ENCODE measurements at regions of chr10 and their contacts with region 1.

Region 1: GRCh38 chr10:21614000-21614399 is 80.0 kb downstream of the MLLT10 start:
- DNase-seq: no peak
- CTCF ChIP-seq: no peak

Region 2: GRCh38 chr10:21584834-21585530 is 29.0 kb before region 1 on chr10:
- CTCF ChIA-PET with region 1: no interaction called
- POLR2A ChIA-PET with region 1: interaction called, 10 read pairs
- DNase-seq: no peak
- CTCF ChIP-seq: no peak

Region 3: GRCh38 chr10:21599582-21599981 is 14.4 kb before region 1 on chr10:
- CTCF ChIA-PET with region 1: no interaction called
- POLR2A ChIA-PET with region 1: no interaction called
- DNase-seq: no peak
- CTCF ChIP-seq: no peak

Region 4: GRCh38 chr10:21649454-21649872 is 35.5 kb after region 1 on chr10:
- CTCF ChIA-PET with region 1: no interaction called
- POLR2A ChIA-PET with region 1: no interaction called
- DNase-seq: no peak
- CTCF ChIP-seq: no peak